ENCODE measurements at regions of chr15 and their contacts with region 1.

Region 1: DNA sequence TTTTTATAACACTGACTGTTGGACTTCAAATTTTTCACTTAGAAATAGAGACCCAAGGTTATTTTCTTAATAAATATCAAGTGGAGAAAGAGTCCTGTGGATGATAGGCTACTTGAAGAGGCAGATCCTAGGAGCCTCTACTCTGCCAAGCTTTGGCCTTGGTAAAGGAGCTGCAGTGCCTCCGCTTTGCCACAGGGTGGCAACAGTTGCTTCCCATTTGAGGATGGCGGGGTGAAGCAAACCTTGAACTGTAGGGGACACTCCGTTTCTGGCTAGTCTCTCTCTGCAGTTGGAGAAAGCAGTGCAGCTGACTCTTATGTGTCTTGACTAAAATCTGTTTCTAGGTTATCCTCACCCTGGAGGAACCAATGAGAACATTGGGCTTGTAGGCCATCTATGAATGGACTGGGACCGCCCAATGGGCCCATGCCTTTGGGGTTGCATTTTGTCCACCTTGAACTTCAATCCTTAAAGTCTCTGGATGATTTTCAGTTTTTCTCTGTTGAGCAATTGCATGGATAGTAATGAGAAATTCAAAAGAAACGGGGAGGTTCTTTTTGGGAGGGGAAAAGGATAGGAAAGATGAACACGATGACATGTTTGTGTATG is 9.8 kb downstream of the SCG5 start:
- DNase-seq: peak in 1 of 2 experiments; percentile 73
- H3K4me3 ChIP-seq: no peak overlapping the region
- H3K27ac ChIP-seq: no peak overlapping the region
- H3K4me1 ChIP-seq: peaks cover 0 to 12% (median 2%) of the 10 kb centered on the region in 4 experiments; a peak in 4 of 7 replicates
- H3K27me3 ChIP-seq: no peaks in the 10 kb centered on the region
- CTCF ChIP-seq: peak; percentile 94 to 98 (median 97)
- EP300 ChIP-seq: no peak
- POLR2A ChIP-seq: no peak
- RAD21 ChIP-seq: peak; percentile 85 to 92

Region 2: GRCh38 chr15:32664796-32665195 is 13.5 kb after region 1 on chr15:
- CTCF ChIA-PET with region 1: interaction called, 48 read pairs
- POLR2A ChIA-PET with region 1: interaction called, 4 read pairs
- DNase-seq: no peak
- H3K4me3 ChIP-seq: no peak overlapping the region
- H3K27ac ChIP-seq: no peak overlapping the region
- H3K4me1 ChIP-seq: peaks cover under 1 to 7% (median 3%) of the 10 kb centered on the region in 4 experiments
- H3K27me3 ChIP-seq: no peaks in the 10 kb centered on the region
- CTCF ChIP-seq: no peak
- EP300 ChIP-seq: no peak
- POLR2A ChIP-seq: no peak
- RAD21 ChIP-seq: no peak

Region 3: DNA sequence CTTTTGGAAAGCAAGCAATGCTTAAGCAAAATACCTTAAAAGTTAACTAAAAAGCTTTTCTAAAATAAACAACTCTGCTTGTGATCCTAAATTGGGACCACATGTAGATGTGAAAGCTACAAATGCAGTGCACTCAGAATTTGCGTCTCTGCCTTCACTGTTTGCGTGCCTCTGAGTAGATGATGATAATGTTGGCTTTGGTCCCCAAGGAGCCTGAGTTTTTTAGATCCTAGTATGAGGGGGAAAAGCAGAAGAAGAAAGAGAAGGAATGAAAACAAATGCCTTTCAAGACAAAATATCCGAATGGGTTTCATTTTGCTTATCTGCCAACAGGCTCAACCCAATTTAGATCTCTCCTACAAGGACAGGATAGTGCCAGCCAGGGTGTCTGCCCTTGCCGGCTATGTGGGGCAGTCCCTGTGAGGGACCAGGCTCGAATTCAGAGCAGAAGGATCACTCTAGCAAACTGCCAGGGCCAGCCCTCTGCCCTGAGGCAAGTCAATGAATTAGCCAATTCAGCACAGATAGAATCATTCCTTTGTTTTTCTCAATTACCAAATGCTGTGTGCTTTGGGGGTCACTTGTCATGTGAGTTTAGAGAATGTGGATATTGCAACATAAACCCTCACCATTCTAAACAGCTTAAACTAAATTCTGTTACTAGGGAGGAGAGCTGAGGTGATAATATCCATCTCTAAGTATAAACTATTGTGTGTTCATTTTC is 18.7 kb after region 1 on chr15:
- CTCF ChIA-PET with region 1: interaction called, 11 read pairs
- POLR2A ChIA-PET with region 1: interaction called, 4 read pairs
- DNase-seq: no peak
- H3K4me3 ChIP-seq: no peak overlapping the region
- H3K27ac ChIP-seq: no peak overlapping the region
- H3K4me1 ChIP-seq: peaks cover 5 to 16% (median 7%) of the 10 kb centered on the region in 4 experiments
- H3K27me3 ChIP-seq: no peaks in the 10 kb centered on the region
- CTCF ChIP-seq: no peak
- EP300 ChIP-seq: no peak
- POLR2A ChIP-seq: no peak
- RAD21 ChIP-seq: no peak

Region 4: GRCh38 chr15:32838820-32839219 is 187.5 kb after region 1 on chr15:
- CTCF ChIA-PET with region 1: interaction called, 17 read pairs
- POLR2A ChIA-PET with region 1: no interaction called
- DNase-seq: no peak
- H3K4me3 ChIP-seq: no peak overlapping the region
- H3K27ac ChIP-seq: no peak overlapping the region
- H3K4me1 ChIP-seq: peaks cover 0 to 4% (median 0%) of the 10 kb centered on the region in 4 experiments; a peak in 2 of 7 replicates
- H3K27me3 ChIP-seq: no peaks in the 10 kb centered on the region
- CTCF ChIP-seq: no peak
- EP300 ChIP-seq: no peak
- POLR2A ChIP-seq: no peak
- RAD21 ChIP-seq: no peak

Region 5: DNA sequence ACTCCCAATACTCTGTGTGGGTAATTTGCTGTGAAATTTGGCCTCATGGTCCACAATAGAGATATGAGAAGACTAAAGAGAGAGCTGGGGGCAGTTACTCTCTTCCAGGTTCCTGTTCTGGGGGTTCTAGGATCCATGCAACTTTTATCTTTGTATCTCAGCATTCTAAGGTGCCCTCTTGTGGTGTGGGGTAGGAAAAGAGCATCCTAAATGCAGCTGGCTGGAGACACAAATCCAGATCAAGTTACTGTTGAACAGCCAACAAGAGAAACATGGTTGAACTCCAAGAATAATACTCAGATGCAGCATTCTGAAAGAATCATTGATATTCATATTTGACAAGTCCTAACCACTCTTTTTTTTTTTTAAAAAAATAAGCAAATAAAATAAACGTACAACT is 304.7 kb after region 1 on chr15:
- CTCF ChIA-PET with region 1: interaction called, 24 read pairs
- POLR2A ChIA-PET with region 1: no interaction called
- DNase-seq: no peak
- H3K4me3 ChIP-seq: no peak overlapping the region
- H3K27ac ChIP-seq: no peak overlapping the region
- H3K4me1 ChIP-seq: peaks cover 7 to 17% (median 14%) of the 10 kb centered on the region in 4 experiments; a peak in 6 of 7 replicates
- H3K27me3 ChIP-seq: no peaks in the 10 kb centered on the region
- CTCF ChIP-seq: peak in 2 of 3 experiments; percentile 65 to 74; a peak in 3 of 4 replicates
- EP300 ChIP-seq: no peak
- POLR2A ChIP-seq: no peak
- RAD21 ChIP-seq: peak; percentile 70 to 88

Region 6: GRCh38 chr15:33132722-33133345 is 481.5 kb after region 1 on chr15:
- CTCF ChIA-PET with region 1: interaction called, 18 read pairs
- POLR2A ChIA-PET with region 1: no interaction called
- DNase-seq: peak in 1 of 2 experiments; percentile 27
- H3K4me3 ChIP-seq: no peak overlapping the region
- H3K27ac ChIP-seq: no peak overlapping the region
- H3K4me1 ChIP-seq: no peaks in the 10 kb centered on the region
- H3K27me3 ChIP-seq: no peaks in the 10 kb centered on the region
- CTCF ChIP-seq: peak in 2 of 3 experiments; percentile 74; a peak in 3 of 4 replicates
- EP300 ChIP-seq: no peak
- POLR2A ChIP-seq: no peak
- RAD21 ChIP-seq: peak; percentile 89 to 94

Measured in H1 (cell line).